Common myeloid progenitor, CD34-positive (primary cell): ENCODE measurements at regions of chr17 and their contacts with region 1.

Region 1: DNA sequence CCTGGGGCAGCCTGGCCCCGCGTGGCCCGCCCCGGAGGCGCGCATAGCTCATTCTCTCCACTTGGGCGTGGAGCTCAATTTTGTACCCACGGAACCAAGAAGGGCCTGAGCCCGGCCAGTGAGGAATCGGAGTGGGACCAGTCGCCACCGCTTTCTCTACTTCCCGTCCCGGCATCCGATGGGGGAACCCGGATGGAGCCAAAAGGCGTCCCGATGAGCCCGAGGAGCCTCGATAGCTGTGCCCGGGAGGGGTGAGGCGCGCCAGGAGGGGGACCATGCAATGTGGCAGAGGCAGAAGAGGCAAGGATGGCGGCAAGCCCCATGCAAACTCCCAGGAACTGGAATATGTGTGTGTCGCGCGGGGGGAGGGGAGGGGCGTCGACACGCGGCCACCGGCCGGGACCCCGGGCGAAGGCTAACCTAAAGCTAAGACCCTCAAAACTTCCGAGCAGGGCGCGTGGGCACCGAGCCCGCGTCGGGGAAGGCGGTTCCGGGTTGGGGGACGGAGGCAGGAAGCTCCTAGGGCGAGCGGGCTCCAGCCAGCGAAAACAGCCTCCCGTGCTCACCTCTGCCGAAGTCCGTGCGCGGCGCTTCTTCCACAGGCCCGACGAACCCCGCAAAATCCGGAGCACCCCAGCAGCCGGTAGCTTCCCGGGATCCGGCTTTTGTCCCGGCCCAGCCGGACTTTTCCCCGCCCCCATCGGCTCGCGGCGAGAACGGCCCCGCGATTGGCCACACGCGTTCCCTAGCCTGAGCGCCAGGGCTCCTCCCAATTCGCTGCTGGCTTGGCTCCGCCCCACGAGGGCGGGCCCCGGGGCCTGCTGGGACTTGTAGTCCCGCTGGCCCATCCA is at the start of gene ACLY:
- DNase-seq: peak; percentile 94 to 97 (median 96)
- H3K4me3 ChIP-seq: peak within 1 kb of the TSS; percentile 94 to 99 (median 96)
- H3K27ac ChIP-seq: peak within 1 kb of the TSS; percentile 67 to 82
- H3K4me1 ChIP-seq: peaks cover 5 to 39% (median 21%) of the 10 kb centered on the region in 4 experiments
- H3K27me3 ChIP-seq: no peaks in the 10 kb centered on the region

Region 2: GRCh38 chr17:41930009-41930832 is 11.7 kb after region 1 on chr17 and contains the start of gene ODAD4:
- CTCF ChIA-PET with region 1: interaction called, 17 read pairs
- POLR2A ChIA-PET with region 1: interaction called, 4 read pairs
- DNase-seq: peak; percentile 98 to 99 (median 99)
- H3K4me3 ChIP-seq: peak within 1 kb of the TSS; percentile 42 to 86 (median 69)
- H3K27ac ChIP-seq: peak within 1 kb of the TSS; percentile 46 to 82
- H3K4me1 ChIP-seq: peaks cover 5 to 37% (median 22%) of the 10 kb centered on the region in 4 experiments
- H3K27me3 ChIP-seq: no peaks in the 10 kb centered on the region

Region 3: GRCh38 chr17:41941168-41941567 is 22.6 kb after region 1 on chr17:
- CTCF ChIA-PET with region 1: no interaction called
- POLR2A ChIA-PET with region 1: no interaction called
- DNase-seq: no peak
- H3K4me3 ChIP-seq: no peak overlapping the region
- H3K27ac ChIP-seq: no peak overlapping the region
- H3K4me1 ChIP-seq: peaks cover 0 to 3% (median 1%) of the 10 kb centered on the region in 4 experiments
- H3K27me3 ChIP-seq: no peaks in the 10 kb centered on the region

Region 4: DNA sequence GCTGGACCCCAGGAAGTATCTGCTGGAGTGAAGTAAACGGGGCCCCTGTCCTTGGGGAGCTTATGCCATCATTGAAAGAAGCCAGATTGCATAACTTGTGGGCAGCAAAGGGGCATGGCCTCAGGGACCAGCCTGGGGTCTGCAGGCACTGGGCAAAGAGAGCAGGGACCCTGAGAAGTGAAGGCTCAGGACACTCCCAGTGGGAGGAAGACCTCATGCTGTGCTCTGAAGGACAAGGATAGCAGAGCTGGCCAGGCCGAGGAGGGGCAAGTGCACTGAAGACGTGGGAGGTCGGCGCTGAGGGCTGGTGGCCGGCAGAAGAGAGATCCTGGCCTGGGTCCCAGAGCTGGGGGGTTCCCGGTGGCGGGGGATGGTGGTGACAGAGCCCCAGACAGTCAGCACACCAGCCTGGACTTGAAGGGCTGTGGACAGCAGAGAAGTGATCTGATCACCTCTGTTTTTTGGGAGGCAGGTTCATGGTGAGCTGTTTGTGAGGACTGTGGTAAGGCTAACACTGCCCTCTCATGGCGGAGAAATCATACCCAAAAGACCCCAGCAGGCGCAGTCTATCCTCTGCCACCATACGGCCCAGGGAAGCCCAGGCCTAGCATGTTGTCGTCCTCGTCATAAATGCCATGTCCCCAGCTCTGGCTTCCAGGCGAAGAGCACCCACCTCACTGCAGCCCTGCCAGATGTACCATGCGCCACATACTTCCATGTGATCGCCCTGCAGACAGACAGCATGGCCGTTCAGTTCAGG is 41.0 kb after region 1 on chr17:
- CTCF ChIA-PET with region 1: interaction called, 10 read pairs
- POLR2A ChIA-PET with region 1: no interaction called
- DNase-seq: peak; percentile 61 to 76 (median 76)
- H3K4me3 ChIP-seq: no peak overlapping the region
- H3K27ac ChIP-seq: no peak overlapping the region
- H3K4me1 ChIP-seq: peaks cover 0 to 21% (median 7%) of the 10 kb centered on the region in 4 experiments
- H3K27me3 ChIP-seq: no peaks in the 10 kb centered on the region